ENCODE measurements at regions of chr4 and their contacts with region 1.

Region 1: GRCh38 chr4:52028969-52029368 is 8.8 kb upstream of the LRRC66 start:
- DNase-seq: no peak
- H3K4me3 ChIP-seq: no peak overlapping the region
- H3K4me3 Mint-ChIP-seq: no peak overlapping the region
- H3K27ac ChIP-seq: no peak overlapping the region
- H3K27ac Mint-ChIP-seq: no peak overlapping the region
- H3K4me1 ChIP-seq: peaks cover 3 to 5% of the 10 kb centered on the region in 2 donors
- H3K4me1 Mint-ChIP-seq: peaks cover 7% of the 10 kb centered on the region
- H3K27me3 ChIP-seq: no peaks in the 10 kb centered on the region
- H3K27me3 Mint-ChIP-seq: peaks cover 0 to 2% (median 1%) of the 10 kb centered on the region in 3 donors
- CTCF ChIP-seq: no peak

Region 2: GRCh38 chr4:51895813-51896408 is 133.1 kb before region 1 on chr4:
- intact Hi-C with region 1: loop called in 1 of 2 experiments (anchors 5 kb)
- DNase-seq: peak; percentile 30 to 69 (median 63)
- H3K4me3 ChIP-seq: no peak overlapping the region
- H3K4me3 Mint-ChIP-seq: no peak overlapping the region
- H3K27ac ChIP-seq: peak overlapping the region in 1 of 2 donors; percentile 23
- H3K27ac Mint-ChIP-seq: peak overlapping the region in 1 of 7 donors; percentile 41
- H3K4me1 ChIP-seq: peaks cover 10 to 11% of the 10 kb centered on the region in 2 donors
- H3K4me1 Mint-ChIP-seq: peaks cover 20% of the 10 kb centered on the region
- H3K27me3 ChIP-seq: no peaks in the 10 kb centered on the region
- H3K27me3 Mint-ChIP-seq: no peaks in the 10 kb centered on the region
- CTCF ChIP-seq: peak; percentile 87

Region 3: DNA sequence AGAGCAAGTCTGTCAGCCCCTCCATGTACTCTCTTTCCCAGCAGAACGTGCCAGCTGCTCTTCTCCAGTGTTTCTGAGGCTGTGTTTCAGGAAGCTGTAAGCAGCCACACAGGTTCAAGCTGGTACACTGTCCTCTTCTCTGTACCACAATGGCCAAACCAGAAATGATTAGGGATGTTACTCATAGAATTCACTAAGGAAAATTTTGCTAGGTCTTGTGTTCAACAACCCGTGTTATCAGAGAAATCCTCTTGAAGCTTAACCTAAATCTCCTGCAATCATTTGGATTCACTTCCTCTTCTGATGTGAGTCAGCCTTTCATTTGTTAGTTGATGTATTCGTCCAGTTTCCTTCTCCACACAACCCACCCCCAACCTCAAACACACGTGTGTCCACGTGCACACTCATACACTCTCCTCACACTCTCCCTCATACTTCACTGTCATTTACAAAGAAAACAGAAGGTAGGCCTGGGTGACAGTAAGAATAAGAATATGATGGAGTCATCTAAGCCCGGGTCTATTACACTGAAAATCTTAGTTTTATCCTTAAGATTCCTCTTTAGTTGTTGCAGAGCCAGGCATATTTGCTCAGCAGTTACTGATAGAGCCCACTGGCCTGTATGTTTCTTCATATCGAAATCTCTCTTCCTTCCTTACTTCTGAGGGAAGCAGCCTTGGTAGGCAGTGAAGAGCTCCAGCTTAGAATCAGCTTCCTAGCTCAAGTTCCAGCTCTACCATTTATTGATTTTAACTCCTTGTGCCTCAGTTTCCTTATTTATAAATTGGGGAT is 122.6 kb before region 1 on chr4:
- intact Hi-C with region 1: no loop called
- DNase-seq: peak; percentile 74 to 87 (median 82)
- H3K4me3 ChIP-seq: peak overlapping the region in 2 of 3 experiments; percentile 27 to 40
- H3K4me3 Mint-ChIP-seq: peak overlapping the region; percentile 6 to 71
- H3K27ac ChIP-seq: peak overlapping the region; percentile 58 to 72
- H3K27ac Mint-ChIP-seq: peak overlapping the region; percentile 77 to 91 (median 88)
- H3K4me1 ChIP-seq: peaks cover 28 to 35% of the 10 kb centered on the region in 2 donors
- H3K4me1 Mint-ChIP-seq: peaks cover 44% of the 10 kb centered on the region
- H3K27me3 ChIP-seq: no peaks in the 10 kb centered on the region
- H3K27me3 Mint-ChIP-seq: peaks cover 0 to 2% (median 0%) of the 10 kb centered on the region in 3 donors
- CTCF ChIP-seq: no peak

Region 4: GRCh38 chr4:51963841-51964517 is 65.0 kb before region 1 on chr4:
- intact Hi-C with region 1: no loop called
- DNase-seq: no peak
- H3K4me3 ChIP-seq: no peak overlapping the region
- H3K4me3 Mint-ChIP-seq: no peak overlapping the region
- H3K27ac ChIP-seq: no peak overlapping the region
- H3K27ac Mint-ChIP-seq: no peak overlapping the region
- H3K4me1 ChIP-seq: no peaks in the 10 kb centered on the region
- H3K4me1 Mint-ChIP-seq: no peaks in the 10 kb centered on the region
- H3K27me3 ChIP-seq: no peaks in the 10 kb centered on the region
- H3K27me3 Mint-ChIP-seq: peaks cover 0 to 7% (median 2%) of the 10 kb centered on the region in 3 donors
- CTCF ChIP-seq: no peak